BJ (cell line): ENCODE measurements at regions of chr9 and their contacts with region 1.

Region 1: DNA sequence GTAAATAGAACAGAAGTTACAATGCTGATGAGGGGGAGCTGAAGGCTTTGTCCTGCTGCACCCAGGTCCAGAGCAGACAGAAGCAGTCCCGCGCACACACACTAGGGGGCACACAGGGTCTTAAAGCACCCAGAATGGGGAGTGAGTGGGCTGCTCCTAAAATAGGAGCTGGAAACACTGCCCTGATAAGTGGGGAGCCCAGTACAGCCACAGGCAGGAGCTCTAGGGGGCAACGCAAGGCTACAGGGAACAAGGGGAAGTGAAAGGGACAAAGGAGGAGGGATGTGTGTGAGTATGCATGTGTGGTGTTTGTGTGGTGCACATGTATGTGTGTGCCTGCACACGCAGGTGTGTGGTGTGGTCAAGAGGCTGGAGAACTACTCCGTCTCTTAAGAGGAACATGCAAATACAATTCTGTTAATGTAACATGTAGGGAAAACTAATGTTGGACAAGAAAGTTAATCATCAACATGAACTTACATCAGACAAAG is 191.5 kb downstream of the ROR2 start:
- DNase-seq: no peak
- H3K4me3 ChIP-seq: no peak overlapping the region
- H3K27me3 ChIP-seq: no peaks in the 10 kb centered on the region; the same call in 1 of the 2 replicates
- CTCF ChIP-seq: peak; percentile 86

Region 2: DNA sequence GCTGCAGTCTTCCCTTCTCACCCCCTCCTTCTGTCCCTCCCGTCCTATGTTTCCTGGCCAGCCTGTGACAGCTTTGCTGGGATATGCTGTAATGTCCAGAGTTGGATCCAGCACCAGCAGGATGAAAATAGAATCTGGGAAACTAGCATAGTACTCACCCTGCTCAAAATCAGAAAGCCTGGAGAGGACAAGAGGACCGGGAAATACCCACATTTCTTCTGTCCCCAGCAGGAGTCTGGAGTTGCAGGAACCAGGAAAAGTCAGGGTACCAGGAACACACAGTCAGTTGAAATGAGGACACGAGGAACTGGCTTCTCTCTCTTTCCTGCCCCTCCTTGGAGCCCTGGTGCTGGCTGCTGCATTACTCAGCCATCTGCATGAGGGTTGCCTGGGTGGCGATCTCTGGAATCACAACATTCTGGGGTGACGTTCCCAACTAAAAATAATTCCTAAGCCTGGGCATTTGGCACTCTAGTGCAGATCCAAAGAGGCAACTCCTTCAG is 275.3 kb before region 1 on chr9:
- CTCF ChIA-PET with region 1: no interaction called
- POLR2A ChIA-PET with region 1: no interaction called
- DNase-seq: no peak
- H3K4me3 ChIP-seq: no peak overlapping the region
- H3K27me3 ChIP-seq: no peaks in the 10 kb centered on the region; the same call in 1 of the 2 replicates
- CTCF ChIP-seq: no peak

Region 3: GRCh38 chr9:91711755-91712601 is 46.6 kb before region 1 on chr9:
- CTCF ChIA-PET with region 1: no interaction called
- POLR2A ChIA-PET with region 1: no interaction called
- DNase-seq: no peak
- H3K4me3 ChIP-seq: no peak overlapping the region
- H3K27me3 ChIP-seq: no peaks in the 10 kb centered on the region
- CTCF ChIP-seq: no peak

Region 4: DNA sequence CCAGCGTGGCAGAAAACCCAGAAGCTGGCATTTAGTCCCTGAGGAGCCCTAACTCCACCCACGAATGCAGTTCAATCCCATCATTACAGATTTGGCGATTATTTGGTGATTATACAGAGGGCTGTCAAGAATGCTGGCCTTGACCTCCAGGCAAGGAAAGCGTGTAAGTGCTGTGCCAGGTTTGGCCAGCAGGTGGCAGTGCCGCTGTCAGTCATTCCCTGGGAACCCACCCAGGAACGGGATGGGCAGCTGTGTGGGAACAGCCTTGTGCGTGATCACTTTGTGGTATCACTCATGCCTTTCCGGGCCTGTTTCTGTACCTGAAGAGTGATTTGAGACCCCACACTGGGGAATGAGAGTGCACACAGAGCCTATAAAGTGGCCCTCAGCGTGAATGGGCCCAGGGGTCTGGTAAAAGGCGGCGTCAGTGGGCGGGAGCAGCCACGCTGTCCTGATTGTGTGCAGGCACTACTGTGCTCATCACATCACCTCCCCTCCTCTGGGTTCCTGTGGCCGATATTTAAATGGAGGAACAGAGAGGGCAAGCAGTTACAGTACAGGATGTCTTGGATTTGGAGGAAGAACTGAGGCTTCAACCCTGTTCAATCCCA is 24.1 kb before region 1 on chr9:
- CTCF ChIA-PET with region 1: interaction called, 19 read pairs
- POLR2A ChIA-PET with region 1: no interaction called
- DNase-seq: no peak
- H3K4me3 ChIP-seq: no peak overlapping the region
- H3K27me3 ChIP-seq: peaks cover 3% of the 10 kb centered on the region; the same call in 1 of the 2 replicates
- CTCF ChIP-seq: peak; percentile 97

Region 5: GRCh38 chr9:91746904-91747303 is 11.6 kb before region 1 on chr9:
- CTCF ChIA-PET with region 1: interaction called, 10 read pairs
- POLR2A ChIA-PET with region 1: no interaction called
- DNase-seq: no peak
- H3K4me3 ChIP-seq: no peak overlapping the region
- H3K27me3 ChIP-seq: no peaks in the 10 kb centered on the region
- CTCF ChIP-seq: no peak

Region 6: DNA sequence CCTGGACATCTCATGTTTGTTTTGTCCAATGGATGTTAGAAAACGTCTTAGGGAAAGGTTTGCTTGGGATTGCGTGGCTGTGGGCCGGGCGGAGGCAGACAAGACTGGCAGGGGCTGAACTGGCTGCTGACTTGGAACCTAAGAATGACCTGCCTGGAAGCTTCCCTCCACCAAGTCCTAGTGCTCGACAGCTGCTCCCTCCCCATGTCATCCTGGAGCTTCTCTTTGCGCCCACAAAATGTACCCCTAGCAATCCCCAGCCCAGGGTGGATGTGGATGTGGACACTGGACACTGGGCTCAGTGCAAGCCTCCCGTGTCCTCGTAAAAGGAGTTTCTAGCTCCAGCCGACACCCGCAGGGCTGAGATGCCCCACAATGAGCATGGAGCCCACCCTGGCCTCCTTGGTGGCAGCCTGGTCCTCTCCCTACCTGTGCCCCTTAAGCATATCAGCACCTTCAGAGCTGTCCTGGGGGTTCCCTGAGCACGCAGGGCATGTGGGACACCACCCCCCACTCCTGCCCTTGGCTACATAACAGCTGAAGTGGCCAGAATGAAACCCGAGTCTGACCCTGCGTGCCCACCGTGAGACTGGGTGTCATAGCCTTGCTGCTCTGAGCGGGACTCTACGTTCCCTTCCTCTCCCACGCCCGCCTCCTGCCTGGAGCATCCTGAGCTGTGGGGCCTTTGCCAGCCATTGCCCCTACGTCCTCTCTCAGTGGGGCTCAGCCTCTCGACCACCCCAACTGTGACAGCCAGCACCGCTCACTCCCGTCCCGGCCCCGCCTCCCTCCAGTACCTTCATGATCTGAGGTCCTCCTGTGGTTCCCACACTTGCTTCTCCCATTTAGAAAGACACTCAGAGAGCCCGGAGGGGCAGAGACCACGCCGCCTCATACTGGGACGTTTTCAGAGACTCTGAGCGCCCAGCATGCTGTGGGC is 10.7 kb after region 1 on chr9:
- CTCF ChIA-PET with region 1: interaction called, 77 read pairs
- POLR2A ChIA-PET with region 1: no interaction called
- DNase-seq: no peak
- H3K4me3 ChIP-seq: no peak overlapping the region
- H3K27me3 ChIP-seq: peaks cover 7% of the 10 kb centered on the region
- CTCF ChIP-seq: no peak

Region 7: GRCh38 chr9:91775011-91775707 is 16.6 kb after region 1 on chr9:
- CTCF ChIA-PET with region 1: interaction called, 77 read pairs
- POLR2A ChIA-PET with region 1: no interaction called
- DNase-seq: no peak
- H3K4me3 ChIP-seq: no peak overlapping the region
- H3K27me3 ChIP-seq: peaks cover 5% of the 10 kb centered on the region; the same call in 1 of the 2 replicates
- CTCF ChIP-seq: peak; percentile 79